ENCODE measurements at regions of chr3 and their contacts with region 1.

Region 1: DNA sequence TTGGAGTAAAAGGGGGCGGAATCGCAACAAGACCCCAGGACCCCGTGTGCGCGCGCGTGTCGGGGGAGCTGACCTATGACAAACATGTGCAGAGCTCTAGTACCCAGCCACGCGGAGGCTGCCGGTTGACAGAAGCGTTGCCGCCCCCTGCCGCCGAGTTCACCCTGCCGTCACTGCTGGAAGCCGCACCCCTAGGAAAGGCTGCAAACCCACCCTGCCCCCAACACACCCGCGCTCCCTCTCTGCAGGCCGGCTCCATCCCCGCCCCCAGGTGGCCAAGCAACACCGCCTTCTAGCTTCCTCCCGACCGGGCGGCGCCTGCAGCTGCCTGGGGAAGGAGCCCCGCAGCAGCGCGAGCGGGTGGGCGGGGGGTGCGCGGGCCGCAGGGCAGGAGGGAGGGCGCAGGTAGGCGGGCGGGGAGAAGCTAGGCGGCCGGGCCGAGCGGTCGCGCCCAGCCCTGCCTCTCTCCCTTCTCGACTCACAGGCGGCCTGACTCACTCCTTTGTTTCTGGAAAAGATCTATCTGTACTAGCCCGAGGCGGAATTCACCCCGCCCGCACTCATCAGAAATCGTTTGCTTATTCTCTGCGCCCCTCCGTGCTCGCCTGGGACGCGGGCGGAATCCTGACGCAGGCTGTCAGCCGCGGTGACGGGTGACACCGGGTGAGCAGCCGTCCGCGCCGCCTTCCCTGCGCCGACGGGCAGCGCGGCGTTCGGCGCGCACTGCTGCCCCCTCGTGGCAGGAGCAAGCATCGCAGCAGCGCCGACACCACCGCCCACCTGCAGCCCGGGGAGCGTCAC is 160.8 kb downstream of the GAP43 start:
- DNase-seq: peak; percentile 94
- H3K4me3 ChIP-seq: peak overlapping the region; percentile 69 to 87 (median 73)
- H3K27ac ChIP-seq: peak overlapping the region; percentile 84 to 95 (median 90)
- H3K4me1 ChIP-seq: peaks cover 5 to 23% (median 14%) of the 10 kb centered on the region in 4 donors
- H3K27me3 ChIP-seq: no peaks in the 10 kb centered on the region
- CTCF ChIP-seq: peak in 2 of 3 experiments; percentile 95 to 97
- EP300 ChIP-seq: no peak
- POLR2A ChIP-seq: no peak

Region 2: DNA sequence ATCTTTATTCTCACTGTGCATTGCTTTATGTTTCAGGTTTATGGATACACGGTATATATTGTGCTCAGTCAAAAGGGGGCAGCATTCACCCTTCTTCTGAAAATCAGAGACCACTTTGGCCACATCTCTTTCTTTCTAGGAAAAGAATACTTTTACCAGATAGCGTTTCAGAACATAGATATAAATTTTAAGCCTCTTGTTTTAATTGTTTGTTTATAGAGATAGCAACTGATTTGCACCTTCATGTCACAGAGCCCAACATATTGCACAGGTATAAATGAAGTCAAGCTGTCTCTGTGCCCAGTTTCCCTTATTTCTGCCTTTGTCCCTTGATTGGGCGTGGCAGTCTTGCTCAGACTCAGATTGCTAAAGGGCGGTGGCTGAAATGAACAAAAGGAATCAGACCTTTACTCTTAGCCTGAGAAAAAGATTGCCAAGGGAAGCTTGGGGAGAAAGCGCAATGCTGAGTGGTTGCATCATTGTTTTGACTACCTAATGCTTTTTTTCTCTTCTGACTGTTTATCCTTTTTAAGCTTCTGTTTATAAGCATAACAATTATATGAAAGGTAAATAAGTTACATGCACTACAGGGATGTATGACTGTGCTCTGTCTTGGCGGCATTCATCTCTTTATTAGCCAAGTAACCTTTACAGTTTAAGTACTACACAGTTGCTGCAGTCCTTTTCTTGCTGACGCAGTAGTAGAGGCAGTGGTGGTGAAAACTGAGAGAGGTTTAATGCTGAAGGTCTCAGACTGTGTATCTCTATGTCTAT is 566.3 kb before region 1 on chr3:
- intact Hi-C with region 1: loop called (anchors 10 kb)
- DNase-seq: no peak
- H3K4me3 ChIP-seq: no peak overlapping the region
- H3K27ac ChIP-seq: no peak overlapping the region
- H3K4me1 ChIP-seq: peaks cover 0 to 14% (median 12%) of the 10 kb centered on the region in 4 donors
- H3K27me3 ChIP-seq: no peaks in the 10 kb centered on the region
- CTCF ChIP-seq: peak; percentile 49 to 61 (median 51)
- EP300 ChIP-seq: no peak
- POLR2A ChIP-seq: no peak

Region 3: GRCh38 chr3:115658337-115659181 is 125.6 kb before region 1 on chr3:
- intact Hi-C with region 1: loop called (anchors 5 kb)
- DNase-seq: peak; percentile 95
- H3K4me3 ChIP-seq: peak overlapping the region; percentile 76 to 82 (median 80)
- H3K27ac ChIP-seq: peak overlapping the region; percentile 95 to 98 (median 97)
- H3K4me1 ChIP-seq: peaks cover 20 to 37% (median 29%) of the 10 kb centered on the region in 4 donors
- H3K27me3 ChIP-seq: no peaks in the 10 kb centered on the region
- CTCF ChIP-seq: no peak
- EP300 ChIP-seq: no peak
- POLR2A ChIP-seq: no peak

Measured in esophagus muscularis mucosa (tissue), 4 donors.